ENCODE measurements at regions of chr11 and their contacts with region 1.

Region 1: GRCh38 chr11:131668500-131669400 is 298.3 kb downstream of the NTM start:
- DNase-seq: peak; percentile 44 to 62 (median 53)
- ATAC-seq: no peak
- H3K4me3 ChIP-seq: no peak overlapping the region
- H3K27ac ChIP-seq: no peak overlapping the region
- H3K4me1 ChIP-seq: no peaks in the 10 kb centered on the region
- H3K27me3 ChIP-seq: no peaks in the 10 kb centered on the region

Region 2: GRCh38 chr11:131408025-131408640 is 260.6 kb before region 1 on chr11:
- intact Hi-C with region 1: loop called in 1 of 4 experiments (anchors 10 kb)
- DNase-seq: no peak
- ATAC-seq: peak; percentile 47 to 63
- H3K4me3 ChIP-seq: no peak overlapping the region
- H3K27ac ChIP-seq: no peak overlapping the region
- H3K4me1 ChIP-seq: no peaks in the 10 kb centered on the region
- H3K27me3 ChIP-seq: no peaks in the 10 kb centered on the region

Region 3: DNA sequence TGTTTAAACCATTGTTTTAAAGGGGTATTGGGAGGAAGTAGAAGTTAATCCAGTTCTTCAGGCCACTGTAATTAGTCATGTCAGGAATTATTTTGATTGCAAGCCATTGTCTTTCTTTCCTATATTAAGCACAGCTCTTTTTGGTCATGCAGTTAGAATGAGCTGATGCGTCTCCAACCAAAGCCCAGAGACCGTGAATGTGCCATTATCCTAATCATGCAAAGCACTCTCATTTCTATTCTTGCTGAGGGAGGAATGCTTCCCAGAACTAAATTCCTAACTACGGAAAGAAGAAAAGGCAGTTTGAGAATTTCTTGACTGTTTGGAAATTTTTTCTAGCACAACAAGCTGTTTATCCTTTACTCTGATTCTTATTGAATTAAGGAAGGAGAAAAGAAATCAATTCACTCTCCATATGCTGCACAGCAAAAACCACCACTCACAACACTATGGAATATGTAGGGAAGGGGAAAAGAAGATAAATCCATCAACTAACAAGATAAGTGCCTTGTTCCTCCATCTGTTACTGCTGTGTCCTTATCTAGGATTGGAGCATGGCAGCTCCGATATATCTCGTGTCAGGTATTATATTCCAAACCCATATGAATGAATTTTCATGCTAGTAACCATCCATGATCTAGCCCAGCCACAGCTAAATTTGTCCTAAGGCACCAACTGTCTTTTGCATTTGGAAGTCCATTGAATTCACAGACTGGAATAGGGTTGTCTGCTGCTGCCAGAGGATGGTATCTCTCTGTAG is 227.5 kb before region 1 on chr11:
- intact Hi-C with region 1: no loop called
- DNase-seq: no peak
- ATAC-seq: no peak
- H3K4me3 ChIP-seq: no peak overlapping the region
- H3K27ac ChIP-seq: no peak overlapping the region
- H3K4me1 ChIP-seq: no peaks in the 10 kb centered on the region
- H3K27me3 ChIP-seq: no peaks in the 10 kb centered on the region

Region 4: DNA sequence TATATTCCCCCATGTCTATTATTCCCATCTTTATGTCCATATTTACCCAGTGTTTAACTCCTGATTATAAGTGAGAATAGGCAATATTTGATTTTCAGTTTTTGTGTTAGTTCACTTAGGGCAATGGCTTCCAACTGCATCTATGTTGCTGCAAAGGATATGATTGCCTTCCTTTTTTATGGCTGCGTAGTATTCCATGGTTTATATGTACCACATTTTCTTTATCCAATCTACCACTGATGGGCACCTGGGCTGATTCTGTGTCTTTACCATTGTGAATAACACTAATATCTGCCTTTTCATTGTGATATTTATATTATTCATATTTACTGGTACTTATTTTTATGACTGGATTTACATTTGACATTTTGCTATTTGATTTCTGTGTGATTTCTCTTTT is 351.3 kb after region 1 on chr11:
- intact Hi-C with region 1: no loop called
- DNase-seq: no peak
- ATAC-seq: no peak
- H3K4me3 ChIP-seq: no peak overlapping the region
- H3K27ac ChIP-seq: no peak overlapping the region
- H3K4me1 ChIP-seq: peaks cover 4% of the 10 kb centered on the region
- H3K27me3 ChIP-seq: no peaks in the 10 kb centered on the region

Measured in right cardiac atrium (tissue), 5 donors.